Endothelial cell of umbilical vein (primary cell): ENCODE measurements at regions of chr13 and their contacts with region 1.

Region 1: DNA sequence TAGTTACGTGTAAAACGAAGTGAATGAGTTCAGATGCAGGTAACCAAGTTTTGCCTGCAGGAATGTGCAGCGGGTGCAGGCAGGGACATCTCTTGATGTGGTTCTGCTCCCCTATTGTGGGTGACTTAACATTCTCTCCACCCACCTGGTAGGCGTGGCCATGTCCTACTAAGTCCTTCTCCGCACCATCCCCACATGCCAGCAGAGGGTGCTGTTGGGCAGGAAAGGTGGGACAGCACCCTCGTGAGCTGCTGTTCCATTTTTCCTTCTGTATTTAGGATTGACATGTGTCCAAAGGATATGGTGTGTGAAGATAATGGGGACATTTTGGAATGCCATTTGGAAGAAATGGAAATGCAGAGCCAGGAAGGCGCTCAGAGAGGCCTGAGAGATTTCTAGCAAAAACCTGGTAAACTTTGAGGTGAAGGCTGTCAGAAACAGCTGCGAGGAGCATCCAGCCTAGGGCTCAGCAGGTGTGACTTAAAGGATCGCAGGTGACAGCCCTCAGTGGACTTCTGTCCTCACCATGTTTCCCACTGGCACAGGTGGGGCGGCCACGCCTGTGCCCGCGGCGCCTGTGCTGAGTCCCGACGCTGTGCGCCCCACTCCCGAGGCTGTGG is 26.2 kb upstream of the MCF2L start:
- DNase-seq: peak; percentile 92
- H3K4me3 ChIP-seq: peak overlapping the region in 2 of 3 experiments; percentile 0 to 24
- H3K27ac ChIP-seq: no peak overlapping the region
- H3K4me1 ChIP-seq: peaks cover 4% of the 10 kb centered on the region
- H3K27me3 ChIP-seq: peaks cover 3 to 7% of the 10 kb centered on the region in 2 experiments
- CTCF ChIP-seq: peak; percentile 92 to 98
- POLR2A ChIP-seq: no peak

Region 2: DNA sequence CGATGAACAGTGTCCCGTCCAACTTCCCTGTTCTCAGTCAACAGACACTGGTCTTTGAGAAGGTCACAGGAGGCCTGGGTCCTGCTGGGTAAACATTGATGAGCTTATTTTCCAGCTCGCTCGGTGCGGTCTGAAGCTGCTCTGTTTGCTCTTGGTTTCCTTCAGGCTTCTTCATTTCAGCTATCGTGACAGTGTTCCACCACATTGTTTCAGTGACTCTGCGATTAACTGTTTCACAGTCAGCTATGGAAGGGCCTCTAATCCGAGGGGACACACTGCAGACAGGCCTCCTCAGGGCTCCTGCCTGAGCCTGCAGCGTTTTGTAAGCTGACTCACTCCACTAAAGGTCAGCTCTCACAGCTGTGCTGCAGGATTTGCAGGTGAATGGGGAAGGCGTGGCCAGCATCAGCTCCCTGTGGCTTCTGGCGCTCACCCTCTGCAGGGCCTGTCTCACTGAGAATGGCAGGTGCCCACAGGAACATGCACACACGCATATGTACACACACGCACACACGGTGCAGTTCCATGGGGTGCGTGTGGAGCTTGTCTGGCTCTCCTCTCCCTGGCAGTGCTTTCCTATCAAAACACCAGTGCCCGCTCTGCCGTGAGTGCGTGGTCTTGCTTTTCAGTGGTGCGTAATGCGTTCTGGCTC is 36.7 kb before region 1 on chr13:
- CTCF ChIA-PET with region 1: no interaction called
- POLR2A ChIA-PET with region 1: no interaction called
- dilution Hi-C with region 1: no loop called
- intact Hi-C with region 1: no loop called
- DNase-seq: no peak
- H3K4me3 ChIP-seq: no peak overlapping the region
- H3K27ac ChIP-seq: no peak overlapping the region
- H3K4me1 ChIP-seq: no peaks in the 10 kb centered on the region
- H3K27me3 ChIP-seq: no peaks in the 10 kb centered on the region
- CTCF ChIP-seq: no peak
- POLR2A ChIP-seq: no peak

Region 3: DNA sequence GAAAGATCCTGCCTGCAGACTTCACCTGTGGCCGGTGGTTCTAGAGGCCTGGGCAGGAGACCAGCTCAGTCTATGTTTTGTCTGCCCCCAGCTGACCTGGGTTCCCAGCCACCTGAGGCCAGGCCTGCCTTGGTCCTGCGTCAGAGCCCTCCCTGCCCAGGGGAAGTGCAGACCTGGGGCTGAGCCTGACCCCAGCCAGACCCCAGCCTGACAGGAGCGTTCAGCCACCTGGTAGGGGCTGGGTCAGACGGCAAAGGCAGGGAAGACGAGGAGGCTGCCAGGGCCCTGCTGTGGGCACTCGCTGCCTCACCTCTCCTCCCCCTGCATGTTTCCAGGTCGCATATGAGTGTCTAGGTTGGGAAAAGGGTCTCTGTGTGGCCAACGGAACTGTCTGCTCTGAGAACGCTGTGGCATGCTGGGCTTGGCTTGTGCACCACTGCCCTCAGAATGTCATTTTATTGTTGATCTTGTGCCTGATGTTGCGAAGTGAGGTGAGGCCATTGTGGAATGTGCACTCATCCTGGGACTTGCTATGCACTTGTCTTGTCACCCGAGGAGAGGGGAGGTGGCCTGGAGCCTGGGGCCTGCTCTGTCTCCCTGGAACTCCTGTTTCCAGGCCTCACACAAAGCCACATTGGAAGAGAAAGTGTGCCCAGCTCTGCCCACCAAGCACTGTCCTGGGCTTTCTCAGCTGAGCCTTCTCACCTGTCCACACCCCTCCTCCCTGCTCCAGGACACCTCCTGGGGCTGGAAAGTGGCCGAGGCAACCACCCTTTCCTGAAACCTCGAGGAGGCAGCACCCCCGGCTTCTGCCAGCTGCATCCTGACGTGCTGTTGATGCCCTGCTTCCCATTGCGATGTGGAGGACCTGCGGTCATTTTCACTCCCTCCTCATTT is 11.0 kb after region 1 on chr13:
- CTCF ChIA-PET with region 1: interaction called, 11 read pairs
- POLR2A ChIA-PET with region 1: no interaction called
- dilution Hi-C with region 1: no loop called
- intact Hi-C with region 1: no loop called
- DNase-seq: no peak
- H3K4me3 ChIP-seq: no peak overlapping the region
- H3K27ac ChIP-seq: no peak overlapping the region
- H3K4me1 ChIP-seq: no peaks in the 10 kb centered on the region
- H3K27me3 ChIP-seq: peaks cover 7 to 25% of the 10 kb centered on the region in 2 experiments
- CTCF ChIP-seq: no peak
- POLR2A ChIP-seq: no peak

Region 4: DNA sequence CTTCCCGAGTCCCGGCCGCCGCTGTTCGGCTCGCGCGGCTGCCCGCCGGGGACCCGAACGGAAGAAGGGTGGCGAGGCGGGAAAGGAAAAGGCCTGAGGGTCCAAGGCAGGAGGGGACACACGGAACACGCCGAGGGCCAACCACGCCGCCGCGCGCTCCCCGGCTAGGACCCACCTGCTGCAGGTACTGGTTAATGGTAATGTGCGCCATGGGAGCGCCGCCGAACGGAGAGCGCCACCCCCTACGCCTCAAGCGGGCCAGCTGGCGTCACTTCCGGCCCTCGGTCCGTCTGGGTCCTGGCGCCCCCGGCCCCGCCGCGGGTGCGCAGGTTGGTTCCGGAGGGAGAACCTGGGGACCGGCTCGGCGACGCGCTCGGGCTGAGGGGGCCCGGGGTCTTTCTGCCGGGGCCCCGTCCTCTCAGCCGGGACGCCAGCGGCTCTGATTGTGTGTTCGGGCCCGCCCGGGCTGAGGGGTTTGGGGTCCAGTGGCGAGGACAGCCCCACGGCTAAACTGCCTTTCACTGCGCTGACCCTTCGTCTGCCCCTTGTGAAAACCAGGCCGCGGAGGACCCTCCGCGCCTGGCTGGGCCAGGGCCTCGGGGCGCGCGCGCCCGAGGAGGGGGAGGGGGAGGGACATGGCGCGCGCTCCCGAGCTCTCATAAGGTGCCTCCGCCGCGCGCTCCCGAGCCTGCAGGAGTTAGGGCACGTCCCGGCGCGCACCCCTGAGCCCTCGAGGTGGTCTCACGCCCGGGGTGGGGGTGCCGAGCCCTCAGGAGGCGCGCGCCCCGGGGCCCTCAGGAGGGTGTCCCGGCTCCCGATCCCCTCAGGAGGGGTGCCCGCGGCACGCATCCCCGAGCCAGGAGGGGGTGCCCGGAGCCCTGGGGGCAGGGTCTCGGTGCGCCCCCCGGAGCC is 265.9 kb after region 1 on chr13 and contains the start of gene PCID2:
- CTCF ChIA-PET with region 1: no interaction called
- POLR2A ChIA-PET with region 1: no interaction called
- dilution Hi-C with region 1: no loop called
- intact Hi-C with region 1: loop called (anchors 5 kb)
- DNase-seq: peak; percentile 85
- H3K4me3 ChIP-seq: peak within 1 kb of the TSS; percentile 73 to 92 (median 91)
- H3K27ac ChIP-seq: peak within 1 kb of the TSS; percentile 98
- H3K4me1 ChIP-seq: peaks cover 19% of the 10 kb centered on the region
- H3K27me3 ChIP-seq: no peaks in the 10 kb centered on the region
- CTCF ChIP-seq: no peak
- POLR2A ChIP-seq: peak; percentile 78
- total RNA-seq, gene PCID2: 48.5 and 55.6 TPM in 2 replicates

Region 5: GRCh38 chr13:113238536-113238935 is 295.7 kb after region 1 on chr13:
- CTCF ChIA-PET with region 1: interaction called, 12 read pairs
- POLR2A ChIA-PET with region 1: no interaction called
- dilution Hi-C with region 1: no loop called
- intact Hi-C with region 1: no loop called
- DNase-seq: no peak
- H3K4me3 ChIP-seq: no peak overlapping the region
- H3K27ac ChIP-seq: no peak overlapping the region
- H3K4me1 ChIP-seq: no peaks in the 10 kb centered on the region
- H3K27me3 ChIP-seq: no peaks in the 10 kb centered on the region
- CTCF ChIP-seq: peak in 1 of 2 donors; percentile 7
- POLR2A ChIP-seq: no peak